OCI-LY7 (cell line): ENCODE measurements at regions of chr7 and their contacts with region 1.

Region 1: DNA sequence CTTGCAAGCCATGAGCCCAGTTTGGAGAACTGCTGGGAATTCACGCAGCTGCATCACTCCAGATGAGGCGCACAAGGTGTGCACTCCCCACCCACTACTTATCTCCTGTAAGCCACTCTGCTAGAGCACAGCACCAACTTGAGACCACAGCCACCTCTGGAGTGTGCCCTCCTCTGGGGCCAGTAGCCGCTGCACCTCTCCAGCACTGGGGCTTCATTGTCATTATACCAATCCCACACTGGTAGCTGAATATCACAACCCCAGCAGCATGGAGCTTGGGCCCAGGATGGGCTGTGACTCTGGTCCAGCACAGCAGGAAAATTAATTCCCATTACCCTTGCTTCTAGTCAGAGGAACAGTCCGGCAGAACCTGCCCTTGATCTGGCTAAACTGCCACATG is 125.6 kb downstream of the LSM5 start:
- DNase-seq: no peak
- H3K4me3 ChIP-seq: no peak overlapping the region
- H3K27ac ChIP-seq: no peak overlapping the region
- H3K4me1 ChIP-seq: no peaks in the 10 kb centered on the region
- CTCF ChIP-seq: no peak

Region 2: DNA sequence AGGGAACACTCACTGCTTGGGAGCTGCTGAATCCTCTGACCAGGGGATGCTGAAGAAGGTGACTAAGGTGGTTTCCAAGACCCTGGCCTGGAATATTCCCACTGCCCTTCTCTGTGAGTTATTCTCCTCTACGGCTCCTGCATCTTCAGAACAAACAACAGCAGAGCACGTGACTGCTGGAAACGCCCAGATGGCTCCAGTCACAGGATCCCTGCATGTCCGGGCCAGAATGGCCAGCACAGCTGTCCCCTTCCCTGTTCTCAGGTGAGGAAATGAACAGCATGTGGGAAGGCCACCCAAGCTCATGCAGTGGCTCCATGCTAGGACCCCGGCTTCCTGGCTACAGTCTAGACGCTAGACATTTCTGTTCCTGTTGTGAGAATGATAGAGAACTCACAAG is 1357.7 kb before region 1 on chr7:
- CTCF ChIA-PET with region 1: no interaction called
- POLR2A ChIA-PET with region 1: no interaction called
- intact Hi-C with region 1: no loop called
- DNase-seq: no peak
- H3K4me3 ChIP-seq: no peak overlapping the region
- H3K27ac ChIP-seq: no peak overlapping the region
- H3K4me1 ChIP-seq: no peaks in the 10 kb centered on the region
- CTCF ChIP-seq: no peak

Region 3: GRCh38 chr7:32330602-32331001 is 34.0 kb before region 1 on chr7:
- CTCF ChIA-PET with region 1: no interaction called
- POLR2A ChIA-PET with region 1: interaction called, 10 read pairs
- intact Hi-C with region 1: no loop called
- DNase-seq: no peak
- H3K4me3 ChIP-seq: no peak overlapping the region
- H3K27ac ChIP-seq: no peak overlapping the region
- H3K4me1 ChIP-seq: no peaks in the 10 kb centered on the region
- CTCF ChIP-seq: no peak